ENCODE measurements at regions of chr17 and their contacts with region 1.

Region 1: DNA sequence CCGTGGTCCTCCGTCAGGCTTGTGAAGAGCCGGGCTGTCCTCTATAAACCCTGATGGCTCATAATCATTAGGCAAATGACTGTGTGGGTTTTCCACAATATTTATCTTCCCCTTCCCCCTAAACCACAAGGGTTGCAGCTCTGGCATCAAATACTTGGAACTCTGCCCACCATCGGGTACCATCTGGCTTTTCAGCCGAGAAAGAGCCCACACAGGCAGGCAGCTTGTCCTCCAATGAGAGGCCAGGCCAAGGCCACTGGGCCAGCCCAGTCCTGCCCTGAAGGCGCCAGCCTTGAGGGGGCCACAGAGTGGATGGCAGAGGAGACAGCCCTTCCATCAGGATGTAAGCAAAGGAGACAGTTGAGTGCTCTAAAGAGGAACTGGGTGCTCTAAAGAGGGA is 31.8 kb upstream of the NAT9 start:
- DNase-seq: peak; percentile 93
- H3K4me3 ChIP-seq: no peak overlapping the region
- H3K27ac ChIP-seq: peak overlapping the region in 1 of 2 experiments; percentile 81; a peak in 2 of 4 replicates
- H3K4me1 ChIP-seq: peaks cover 0 to 57% of the 10 kb centered on the region in 2 experiments; a peak in 2 of 4 replicates
- H3K27me3 ChIP-seq: no peaks in the 10 kb centered on the region
- CTCF ChIP-seq: no peak
- EP300 ChIP-seq: peak in 1 of 2 experiments; percentile 81; a peak in 2 of 4 replicates
- RAD21 ChIP-seq: peak; percentile 30; the same call in 1 of the 2 replicates

Region 2: GRCh38 chr17:74770498-74771318 is 37.2 kb before region 1 on chr17:
- CTCF ChIA-PET with region 1: interaction called, 11 read pairs
- POLR2A ChIA-PET with region 1: no interaction called
- DNase-seq: peak; percentile 91
- H3K4me3 ChIP-seq: no peak overlapping the region
- H3K27ac ChIP-seq: no peak overlapping the region
- H3K4me1 ChIP-seq: peaks cover 23 to 29% of the 10 kb centered on the region in 2 experiments; a peak in 3 of 4 replicates
- H3K27me3 ChIP-seq: no peaks in the 10 kb centered on the region
- CTCF ChIP-seq: peak; percentile 85
- EP300 ChIP-seq: no peak
- RAD21 ChIP-seq: peak; percentile 98

Region 3: DNA sequence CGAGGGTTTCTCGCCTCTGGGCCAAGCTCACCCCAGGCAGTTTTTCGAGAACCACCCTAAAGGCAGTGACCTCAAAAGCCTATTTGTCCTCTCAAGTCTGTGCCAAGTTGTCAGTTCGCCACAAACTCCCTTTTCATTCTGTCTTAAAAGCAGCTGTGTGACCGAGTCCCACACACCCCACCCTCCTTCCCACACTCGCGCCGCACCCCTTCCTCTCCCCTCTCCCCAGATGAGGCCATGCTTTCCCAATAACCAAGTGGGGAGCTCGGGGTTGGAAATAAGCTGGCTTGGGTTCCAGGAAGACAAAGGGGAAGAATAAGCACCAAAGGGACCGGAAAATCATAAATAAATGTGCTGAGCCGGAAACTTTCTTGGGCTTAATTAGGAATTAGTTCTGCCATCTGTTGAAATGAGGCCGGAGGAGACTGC is 15.0 kb after region 1 on chr17:
- CTCF ChIA-PET with region 1: interaction called, 14 read pairs
- POLR2A ChIA-PET with region 1: interaction called, 3 read pairs
- DNase-seq: no peak
- H3K4me3 ChIP-seq: no peak overlapping the region
- H3K27ac ChIP-seq: no peak overlapping the region
- H3K4me1 ChIP-seq: no peaks in the 10 kb centered on the region; a peak in 1 of 4 replicates
- H3K27me3 ChIP-seq: no peaks in the 10 kb centered on the region
- CTCF ChIP-seq: no peak
- EP300 ChIP-seq: no peak
- RAD21 ChIP-seq: no peak

Region 4: DNA sequence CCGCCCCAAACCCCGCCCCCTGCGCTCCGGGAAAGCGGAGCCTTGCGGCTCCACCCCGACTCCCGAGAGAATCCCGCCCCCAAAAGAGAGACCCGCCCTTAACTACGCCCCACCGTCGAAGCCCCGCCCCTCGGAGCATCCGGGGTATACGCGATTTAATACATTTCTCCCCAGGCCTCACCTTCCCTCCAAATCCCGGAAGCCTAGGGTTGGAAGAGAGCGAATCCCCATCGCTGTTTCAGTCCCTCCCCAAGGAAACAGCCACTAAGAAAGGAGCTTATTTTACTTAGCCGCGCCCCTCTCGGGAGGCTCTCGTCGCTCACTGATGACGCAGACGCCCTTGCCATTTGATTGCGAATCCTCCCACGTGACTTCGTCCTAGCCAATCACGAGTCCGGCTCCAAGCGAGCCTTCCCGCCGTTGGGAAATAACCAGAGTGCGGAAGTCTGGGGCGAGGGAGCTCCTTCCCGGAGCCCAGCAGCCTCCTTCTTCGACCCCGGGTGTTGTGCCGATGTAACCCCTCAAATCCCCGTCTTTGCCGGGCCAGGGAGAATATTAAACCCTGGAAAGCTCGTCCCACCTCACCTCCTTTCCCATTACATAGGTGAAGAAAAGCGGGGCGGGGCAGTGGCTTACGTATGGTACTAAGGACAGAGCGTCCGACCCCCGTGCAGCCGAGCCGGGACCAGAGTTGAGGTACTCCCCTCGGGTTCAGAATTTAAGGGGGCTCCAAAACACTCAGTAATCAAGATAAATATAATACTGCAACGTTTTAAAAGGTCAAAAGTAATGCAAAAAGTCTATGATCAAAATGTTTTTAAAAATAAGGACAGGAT is 65.3 kb after region 1 on chr17:
- CTCF ChIA-PET with region 1: interaction called, 3,869 read pairs
- POLR2A ChIA-PET with region 1: interaction called, 11 read pairs
- DNase-seq: peak; percentile 100
- H3K4me3 ChIP-seq: peak overlapping the region; percentile 69 to 88
- H3K27ac ChIP-seq: peak overlapping the region; percentile 60 to 81
- H3K4me1 ChIP-seq: peaks cover 12 to 19% of the 10 kb centered on the region in 2 experiments; a peak in 3 of 4 replicates
- H3K27me3 ChIP-seq: no peaks in the 10 kb centered on the region
- CTCF ChIP-seq: no peak
- EP300 ChIP-seq: no peak
- RAD21 ChIP-seq: no peak

Region 5: DNA sequence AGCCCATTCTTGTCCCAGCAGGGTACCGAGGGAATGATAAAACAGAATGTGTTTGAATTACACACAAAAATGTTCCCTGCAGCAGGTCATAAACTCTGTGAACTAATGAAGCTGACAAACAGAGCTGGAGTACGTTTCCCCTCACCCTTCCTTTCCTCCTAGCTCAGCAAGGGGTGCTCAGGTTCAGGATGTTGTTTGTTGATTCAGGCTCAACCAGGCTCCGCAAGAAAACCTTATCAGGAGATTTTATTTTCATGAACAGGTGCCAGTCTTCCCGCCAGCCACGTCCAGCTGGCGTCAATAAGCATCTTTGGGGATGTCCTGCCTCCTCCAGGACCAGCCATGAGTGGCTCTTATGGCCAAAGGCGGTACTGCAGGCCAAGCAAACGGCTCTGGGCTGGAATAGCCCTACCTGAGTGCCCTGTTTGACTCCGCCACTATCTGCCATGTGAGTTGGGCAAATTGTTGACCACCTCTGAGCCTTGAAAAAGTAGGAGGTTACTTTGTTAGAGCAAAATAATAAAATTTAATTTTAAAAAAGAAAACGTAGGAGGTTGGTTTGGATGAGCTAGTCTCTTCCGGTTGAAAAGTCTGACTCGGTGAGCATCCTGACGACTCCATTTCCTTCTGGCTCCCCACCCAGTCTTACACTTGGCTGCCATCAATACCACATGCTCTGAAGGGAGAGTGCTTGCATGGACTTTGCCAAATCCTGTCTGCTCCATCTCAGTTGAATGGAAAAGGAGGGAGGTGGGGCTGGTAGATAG is 297.9 kb after region 1 on chr17:
- CTCF ChIA-PET with region 1: no interaction called
- POLR2A ChIA-PET with region 1: no interaction called
- DNase-seq: peak; percentile 91
- H3K4me3 ChIP-seq: no peak overlapping the region
- H3K27ac ChIP-seq: no peak overlapping the region
- H3K4me1 ChIP-seq: peaks cover 0 to 16% of the 10 kb centered on the region in 2 experiments; a peak in 1 of 4 replicates
- H3K27me3 ChIP-seq: no peaks in the 10 kb centered on the region
- CTCF ChIP-seq: peak; percentile 79
- EP300 ChIP-seq: no peak
- RAD21 ChIP-seq: peak; percentile 62